Activated CD4-positive, alpha-beta T cell treated with anti-CD3 and anti-CD28 coated beads for 36 hours (primary cell): ENCODE measurements at regions of chr14 and their contacts with region 1.

Region 1: GRCh38 chr14:39114073-39114838 is at the start of gene GEMIN2:
- DNase-seq: peak; percentile 97
- ATAC-seq: peak; percentile 99
- H3K4me3 Mint-ChIP-seq: peak within 1 kb of the TSS; percentile 95
- H3K27ac Mint-ChIP-seq: peak within 1 kb of the TSS; percentile 94
- H3K4me1 Mint-ChIP-seq: peaks cover 19% of the 10 kb centered on the region
- H3K27me3 Mint-ChIP-seq: no peaks in the 10 kb centered on the region
- total RNA-seq, gene GEMIN2: 23.8 to 27.6 TPM

Region 2: GRCh38 chr14:39102969-39103957 is 11.0 kb before region 1 on chr14 and contains the start of gene SEC23A:
- CTCF ChIA-PET with region 1: interaction called, 7 read pairs
- POLR2A ChIA-PET with region 1: interaction called, 14 read pairs
- intact Hi-C with region 1: loop called (anchors 1 kb)
- DNase-seq: peak; percentile 90
- ATAC-seq: peak; percentile 92
- H3K4me3 Mint-ChIP-seq: peak within 1 kb of the TSS; percentile 93
- H3K27ac Mint-ChIP-seq: peak within 1 kb of the TSS; percentile 94
- H3K4me1 Mint-ChIP-seq: peaks cover 37% of the 10 kb centered on the region
- H3K27me3 Mint-ChIP-seq: no peaks in the 10 kb centered on the region
- total RNA-seq, gene SEC23A: 49.6 to 72.8 TPM

Region 3: DNA sequence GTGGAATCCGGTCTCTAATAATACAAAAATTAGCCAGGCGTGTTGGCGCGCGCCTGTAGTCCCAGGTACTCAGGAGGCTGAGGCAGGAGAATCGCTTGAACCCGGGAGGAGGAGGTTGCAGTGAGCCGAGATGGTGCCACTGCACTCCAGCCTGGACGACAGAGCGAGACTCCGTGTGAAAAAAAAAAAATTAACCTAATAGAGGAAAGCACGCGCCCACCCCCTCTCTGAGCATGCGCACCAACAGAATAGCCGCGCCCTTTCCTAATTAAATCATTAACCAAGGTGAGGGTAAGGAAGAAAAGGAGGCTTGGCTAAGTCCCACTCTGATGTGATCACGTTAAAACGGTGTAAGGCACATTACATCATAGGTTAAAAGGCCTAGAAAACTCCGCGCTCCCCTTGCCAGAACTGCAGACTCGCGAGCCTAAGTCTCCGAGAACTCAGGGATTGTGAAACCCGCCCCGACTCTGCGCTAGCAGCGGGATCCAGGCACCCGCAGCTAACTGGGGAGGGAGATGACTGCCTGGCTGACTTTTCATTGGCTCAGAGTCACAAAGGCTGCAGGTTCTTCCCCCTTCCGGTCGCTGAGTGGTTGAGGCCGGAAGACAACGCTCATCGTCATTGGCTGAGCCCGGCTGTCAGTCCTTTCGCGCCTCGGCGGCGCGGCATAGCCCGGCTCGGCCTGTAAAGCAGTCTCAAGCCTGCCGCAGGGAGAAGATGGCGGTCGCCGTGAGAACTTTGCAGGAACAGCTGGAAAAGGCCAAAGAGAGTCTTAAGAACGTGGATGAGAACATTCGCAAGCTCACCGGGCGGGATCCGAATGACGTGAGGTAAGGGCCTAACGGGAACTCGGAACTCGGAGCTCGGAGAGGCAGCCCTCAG is 60.5 kb after region 1 on chr14 and contains the start of gene PNN:
- CTCF ChIA-PET with region 1: no interaction called
- POLR2A ChIA-PET with region 1: interaction called, 8 read pairs
- intact Hi-C with region 1: loop called (anchors 1 kb)
- DNase-seq: peak; percentile 97
- ATAC-seq: peak; percentile 91
- H3K4me3 Mint-ChIP-seq: peak within 1 kb of the TSS; percentile 96
- H3K27ac Mint-ChIP-seq: peak within 1 kb of the TSS; percentile 99
- H3K4me1 Mint-ChIP-seq: peaks cover 40% of the 10 kb centered on the region
- H3K27me3 Mint-ChIP-seq: no peaks in the 10 kb centered on the region
- total RNA-seq, gene PNN: 87.8 to 98.3 TPM

Region 4: DNA sequence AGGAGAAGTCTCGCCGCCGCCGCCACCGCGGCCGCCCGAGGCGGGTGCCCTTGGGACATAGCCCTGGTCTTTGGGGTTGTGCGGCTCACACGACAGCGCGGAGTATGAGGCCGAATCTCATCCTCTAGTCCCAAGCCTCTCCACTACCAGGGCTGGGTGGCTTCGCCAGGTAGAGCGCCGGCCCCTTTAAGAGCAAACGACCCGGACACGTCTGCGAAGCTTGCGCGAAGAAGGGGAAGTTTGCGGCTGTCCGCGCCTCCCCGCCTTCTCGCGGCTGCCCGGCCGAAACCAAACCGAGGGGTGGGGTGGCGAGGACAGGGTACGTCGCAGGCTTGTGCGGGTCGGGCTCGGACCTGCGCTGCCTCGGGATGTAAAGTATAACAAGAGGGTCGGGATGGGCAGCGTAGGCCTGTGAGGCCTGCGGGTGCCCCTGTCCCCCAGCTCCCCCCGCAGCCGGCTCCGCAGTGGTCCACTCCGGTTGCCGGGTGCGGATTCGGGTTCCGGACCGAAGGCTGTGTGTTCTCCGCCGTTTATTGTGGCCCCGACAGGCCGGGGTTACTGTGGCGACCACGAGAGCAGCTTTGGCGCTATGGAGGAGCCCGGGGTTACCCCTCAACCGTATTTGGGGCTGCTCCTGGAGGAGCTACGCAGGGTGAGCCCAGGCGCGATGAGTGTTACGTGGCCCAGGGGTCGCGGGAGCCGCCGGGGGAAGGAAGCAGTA is 152.8 kb after region 1 on chr14:
- CTCF ChIA-PET with region 1: no interaction called
- POLR2A ChIA-PET with region 1: interaction called, 3 read pairs
- intact Hi-C with region 1: loop called (anchors 1 to 10 kb)
- DNase-seq: peak; percentile 77
- ATAC-seq: peak; percentile 63
- H3K4me3 Mint-ChIP-seq: peak overlapping the region; percentile 73
- H3K27ac Mint-ChIP-seq: peak overlapping the region; percentile 95
- H3K4me1 Mint-ChIP-seq: peaks cover 50% of the 10 kb centered on the region
- H3K27me3 Mint-ChIP-seq: no peaks in the 10 kb centered on the region

Region 5: GRCh38 chr14:39383026-39383660 is 268.9 kb after region 1 on chr14:
- CTCF ChIA-PET with region 1: no interaction called
- POLR2A ChIA-PET with region 1: no interaction called
- intact Hi-C with region 1: loop called in 1 of 2 experiments (anchors 5 kb)
- DNase-seq: no peak
- ATAC-seq: peak; percentile 97
- H3K4me3 Mint-ChIP-seq: no peak overlapping the region
- H3K27ac Mint-ChIP-seq: no peak overlapping the region
- H3K4me1 Mint-ChIP-seq: peaks cover 31% of the 10 kb centered on the region
- H3K27me3 Mint-ChIP-seq: no peaks in the 10 kb centered on the region